ENCODE measurements at regions of chr12 and their contacts with region 1.

Region 1: DNA sequence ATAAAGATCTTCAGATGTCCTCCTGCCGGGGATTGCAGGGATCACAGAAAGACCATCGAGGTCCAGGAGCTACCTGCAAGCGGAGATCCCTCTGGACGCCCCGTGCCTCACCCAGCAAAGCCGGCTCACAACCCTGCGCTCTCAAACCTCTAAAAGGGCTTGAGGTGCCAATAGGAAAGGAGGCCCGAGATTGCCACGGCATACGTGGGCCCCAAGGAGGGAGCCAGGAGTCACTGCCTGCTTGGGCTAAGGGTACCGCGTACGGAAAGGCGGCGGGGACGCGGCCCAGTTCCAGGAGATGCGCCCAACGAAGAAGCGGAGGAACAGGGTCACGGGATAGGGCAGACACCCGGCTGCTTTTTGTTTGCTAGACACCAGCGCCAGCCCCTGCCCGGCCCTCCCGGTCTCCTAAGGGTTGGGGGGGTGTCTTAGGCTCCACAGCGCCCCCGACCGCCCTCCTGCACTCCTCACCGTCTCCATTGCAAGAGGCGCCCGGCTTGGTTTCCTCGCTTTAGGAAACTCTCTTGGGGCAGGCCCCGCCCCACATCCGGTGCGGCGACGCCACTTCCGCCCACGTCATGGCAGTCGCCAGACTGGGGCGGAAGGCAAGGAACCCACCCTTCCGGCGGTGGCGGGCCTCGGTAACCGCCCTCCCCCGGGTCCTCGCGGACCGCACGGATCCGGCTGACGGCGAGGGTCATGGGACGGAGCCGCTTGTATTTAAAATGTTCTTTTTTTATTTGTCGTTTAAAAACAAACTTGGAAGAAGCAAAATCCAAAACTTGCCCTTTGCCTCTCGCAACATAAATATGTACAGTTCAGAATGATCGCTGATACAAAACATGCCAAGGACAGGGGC is at the start of gene PRKAG1:
- DNase-seq: peak; percentile 99
- total RNA-seq, gene PRKAG1: 52.2 to 57.3 TPM

Region 2: DNA sequence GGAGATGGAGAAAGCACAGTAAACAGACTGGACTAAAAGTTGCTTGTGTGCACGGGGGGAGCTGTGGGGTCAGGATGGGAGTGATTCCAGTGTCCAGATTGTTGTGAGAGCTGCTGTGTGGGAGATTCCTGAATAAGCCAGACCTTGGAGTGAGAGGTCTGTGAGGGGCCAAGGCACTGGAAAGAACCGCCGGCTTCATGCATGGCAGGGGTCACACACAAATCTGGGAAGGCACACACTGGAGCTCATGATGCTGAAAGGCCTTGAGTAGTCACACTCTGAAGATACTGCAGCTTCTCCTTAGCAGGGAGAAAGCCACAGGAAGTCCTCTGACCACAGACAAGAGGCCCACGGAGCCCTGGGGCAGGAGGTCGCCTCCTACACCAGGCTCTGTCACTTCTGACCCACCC is 252.7 kb before region 1 on chr12:
- intact Hi-C with region 1: loop called in 1 of 2 experiments (anchors 5 kb)
- DNase-seq: no peak

Region 3: DNA sequence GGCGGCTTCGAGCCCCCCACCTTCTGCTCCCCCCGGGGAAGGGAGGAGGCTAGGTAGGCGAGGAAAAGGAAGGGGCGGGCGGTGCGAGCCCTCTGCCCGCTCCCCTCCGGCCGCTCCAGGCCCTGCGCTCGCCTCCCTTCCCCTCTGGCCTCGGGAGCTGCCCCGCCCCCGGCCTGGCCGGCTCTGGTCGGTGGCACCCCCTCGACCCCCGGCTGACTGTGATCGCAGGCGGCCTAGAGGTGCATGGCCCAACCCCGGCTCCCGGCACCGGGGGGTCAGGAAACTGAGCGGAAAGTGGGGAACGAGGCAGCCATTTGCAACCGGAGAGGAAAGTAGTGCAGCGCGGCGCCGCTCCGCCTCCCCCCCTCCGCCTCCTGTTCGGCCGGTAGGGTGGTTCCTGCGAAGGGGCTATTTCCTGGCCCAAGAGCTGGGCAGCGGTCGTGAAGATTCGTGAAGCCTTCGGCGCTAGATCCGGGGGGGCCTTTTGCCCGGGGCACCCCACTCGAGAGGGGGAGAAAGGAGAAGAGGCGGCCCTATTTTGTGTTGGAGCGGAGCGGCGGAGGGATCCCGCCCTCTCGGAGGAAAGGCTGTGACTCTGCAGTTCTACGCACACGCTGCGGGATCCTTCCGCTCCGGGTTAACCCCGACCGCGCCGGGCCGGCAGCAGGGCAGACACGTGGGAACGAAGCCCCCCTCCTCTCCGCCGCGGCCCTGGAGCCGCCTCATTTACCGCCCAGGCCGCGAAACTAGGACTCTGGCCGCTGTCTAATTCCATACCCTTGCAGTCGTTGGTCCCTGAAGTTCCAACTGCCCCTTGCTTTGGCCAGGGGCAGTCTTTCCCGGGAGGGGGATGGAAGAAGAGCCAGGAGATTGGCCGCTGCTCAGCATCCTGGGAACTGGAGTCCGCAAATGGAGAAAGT is 42.0 kb after region 1 on chr12 and contains the start of gene KMT2D:
- intact Hi-C with region 1: loop called in 1 of 2 experiments (anchors 2 kb)
- DNase-seq: peak; percentile 97
- total RNA-seq, gene KMT2D: 59.5 to 63.3 TPM

Region 4: DNA sequence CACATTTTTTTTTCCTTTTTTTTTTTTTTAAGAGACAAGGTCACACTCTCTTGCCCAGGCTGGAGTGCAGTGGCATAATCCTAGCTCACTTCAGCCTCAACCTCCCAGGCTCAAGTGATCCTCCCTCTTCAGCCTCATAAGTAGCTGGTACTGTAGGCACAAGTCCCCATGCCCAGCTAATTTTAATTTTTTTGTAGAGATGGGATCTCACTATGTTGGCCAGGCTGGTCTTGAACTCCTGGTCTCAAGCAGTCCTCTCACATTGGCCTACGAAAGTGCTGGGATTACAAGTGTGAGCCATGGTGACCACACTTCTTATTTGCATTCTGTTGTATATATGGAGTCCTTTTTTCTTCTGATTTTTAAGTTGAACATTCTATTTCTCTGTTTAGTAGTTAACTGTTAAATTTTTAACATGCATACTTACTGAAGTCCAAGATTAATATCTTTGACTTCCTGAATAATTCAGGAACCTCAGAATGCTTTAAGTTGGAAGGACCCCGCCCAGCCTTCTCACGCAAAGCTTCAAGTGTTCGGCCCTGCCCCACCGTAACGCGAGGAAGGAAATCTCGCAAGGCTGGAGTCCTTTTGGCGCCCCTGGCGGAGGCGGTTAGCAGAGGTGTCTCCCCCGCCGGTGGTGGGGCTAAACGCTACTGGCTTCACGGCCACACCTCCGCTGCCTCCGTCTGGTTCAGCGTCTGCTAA is 370.3 kb after region 1 on chr12:
- intact Hi-C with region 1: no loop called
- DNase-seq: peak; percentile 89

Measured in posterior vena cava (tissue), 2 donors.